Calu3 (cell line): ENCODE measurements at regions of chr9 and their contacts with region 1.

Region 1: GRCh38 chr9:7570107-7570720 is 229.4 kb downstream of the DMAC1 start:
- DNase-seq: peak; percentile 49
- H3K4me3 Mint-ChIP-seq: no peak overlapping the region
- H3K27ac Mint-ChIP-seq: no peak overlapping the region
- H3K4me1 Mint-ChIP-seq: no peaks in the 10 kb centered on the region
- H3K27me3 Mint-ChIP-seq: peaks cover 26% of the 10 kb centered on the region
- CTCF ChIP-seq: peak; percentile 57

Region 2: GRCh38 chr9:7640231-7640630 is 70.0 kb after region 1 on chr9:
- CTCF ChIA-PET with region 1: no interaction called
- intact Hi-C with region 1: no loop called
- DNase-seq: no peak
- H3K4me3 Mint-ChIP-seq: no peak overlapping the region
- H3K27ac Mint-ChIP-seq: no peak overlapping the region
- H3K4me1 Mint-ChIP-seq: no peaks in the 10 kb centered on the region
- H3K27me3 Mint-ChIP-seq: no peaks in the 10 kb centered on the region
- CTCF ChIP-seq: no peak

Region 3: DNA sequence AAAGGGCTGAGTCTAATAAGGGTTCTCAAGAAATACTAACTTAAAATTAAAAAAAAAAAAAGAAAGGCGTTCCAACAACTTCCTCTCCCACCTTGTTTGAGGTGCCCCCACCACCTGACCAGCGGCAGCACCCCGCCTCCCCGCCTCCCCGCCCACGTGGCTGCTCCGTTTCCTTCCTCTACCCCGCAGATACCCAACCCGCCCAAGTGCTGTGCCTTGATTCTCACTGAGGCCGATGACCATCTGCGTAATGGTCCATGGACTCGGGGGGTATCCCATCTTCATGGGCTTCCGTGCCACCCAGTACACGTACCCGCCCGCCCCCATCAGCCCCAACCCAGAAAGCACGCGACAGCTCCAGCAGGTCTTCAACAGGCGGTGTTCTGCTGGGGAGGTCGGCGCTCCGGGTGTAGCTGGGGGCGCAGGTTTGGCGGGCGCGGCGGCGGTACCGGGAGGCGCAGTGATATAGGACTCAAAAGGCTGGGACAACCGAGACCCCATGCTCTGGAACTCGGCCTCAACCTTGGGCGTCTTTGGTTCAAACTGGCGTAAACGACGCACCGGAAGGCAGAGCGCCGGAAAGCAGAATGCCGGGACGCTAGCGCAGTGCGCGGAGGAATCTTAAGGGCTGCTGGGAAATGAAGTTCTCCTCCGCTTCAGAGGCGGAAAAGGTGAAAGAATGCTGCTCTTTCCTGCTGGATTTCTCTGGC is 229.2 kb after region 1 on chr9 and contains the start of gene DMAC1:
- CTCF ChIA-PET with region 1: no interaction called
- intact Hi-C with region 1: loop called (anchors 10 kb)
- DNase-seq: peak; percentile 70
- H3K4me3 Mint-ChIP-seq: peak within 1 kb of the TSS; percentile 78
- H3K27ac Mint-ChIP-seq: peak within 1 kb of the TSS; percentile 60
- H3K4me1 Mint-ChIP-seq: no peaks in the 10 kb centered on the region
- H3K27me3 Mint-ChIP-seq: no peaks in the 10 kb centered on the region
- CTCF ChIP-seq: no peak
- total RNA-seq, gene DMAC1: 37.5 and 38.7 TPM in 2 replicates

Region 4: DNA sequence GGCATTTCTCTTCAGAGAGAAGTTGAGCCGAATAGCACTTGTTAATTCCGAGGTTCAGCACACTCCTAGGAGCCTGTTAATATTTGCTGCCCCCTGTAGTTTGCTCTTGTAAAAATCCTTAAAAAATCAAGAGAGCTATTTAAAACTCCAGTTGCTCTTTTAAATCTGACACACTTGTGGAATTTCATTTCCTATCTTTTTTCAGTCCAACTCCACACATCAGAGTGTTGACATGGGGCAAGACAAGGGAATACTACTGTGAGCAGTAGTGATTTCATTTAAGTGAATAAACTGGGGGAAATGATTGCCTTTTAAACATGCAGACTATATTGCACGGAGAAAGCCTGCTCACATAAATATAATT is 1325.6 kb after region 1 on chr9:
- CTCF ChIA-PET with region 1: no interaction called
- intact Hi-C with region 1: loop called (anchors 10 kb)
- DNase-seq: peak; percentile 3
- H3K4me3 Mint-ChIP-seq: no peak overlapping the region
- H3K27ac Mint-ChIP-seq: no peak overlapping the region
- H3K4me1 Mint-ChIP-seq: no peaks in the 10 kb centered on the region
- H3K27me3 Mint-ChIP-seq: no peaks in the 10 kb centered on the region
- CTCF ChIP-seq: no peak